ENCODE measurements at regions of chr19 and their contacts with region 1.

Region 1: DNA sequence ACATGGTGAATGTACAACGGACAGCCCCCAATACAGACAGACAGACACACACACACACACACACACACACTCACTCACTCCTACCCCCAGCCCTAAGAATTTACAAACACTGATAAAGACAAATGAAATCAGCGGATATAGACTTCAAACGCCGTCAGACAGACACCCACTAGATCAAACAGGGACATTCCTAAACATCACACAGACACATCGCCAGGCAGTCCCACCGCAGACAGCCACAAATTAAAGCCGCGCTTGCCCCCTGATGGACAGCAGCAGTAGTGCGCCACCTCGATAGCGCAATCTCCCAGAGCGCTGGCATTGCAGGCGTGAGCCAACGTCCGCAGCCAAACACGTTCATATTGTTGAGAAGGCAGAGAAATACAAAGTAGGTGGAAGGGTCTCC is 24.7 kb upstream of the ADGRE1 start:
- DNase-seq: peak; percentile 96
- H3K4me3 ChIP-seq: peak overlapping the region; percentile 62
- H3K27ac ChIP-seq: peak overlapping the region; percentile 56
- H3K4me1 ChIP-seq: peaks cover 18% of the 10 kb centered on the region
- CTCF ChIP-seq: peak; percentile 100

Region 2: GRCh38 chr19:6516659-6517291 is 345.9 kb before region 1 on chr19:
- CTCF ChIA-PET with region 1: no interaction called
- POLR2A ChIA-PET with region 1: no interaction called
- intact Hi-C with region 1: loop called (anchors 1 kb)
- DNase-seq: peak; percentile 98
- H3K4me3 ChIP-seq: peak overlapping the region; percentile 70
- H3K27ac ChIP-seq: peak overlapping the region; percentile 90
- H3K4me1 ChIP-seq: peaks cover 53% of the 10 kb centered on the region
- CTCF ChIP-seq: peak; percentile 100

Region 3: DNA sequence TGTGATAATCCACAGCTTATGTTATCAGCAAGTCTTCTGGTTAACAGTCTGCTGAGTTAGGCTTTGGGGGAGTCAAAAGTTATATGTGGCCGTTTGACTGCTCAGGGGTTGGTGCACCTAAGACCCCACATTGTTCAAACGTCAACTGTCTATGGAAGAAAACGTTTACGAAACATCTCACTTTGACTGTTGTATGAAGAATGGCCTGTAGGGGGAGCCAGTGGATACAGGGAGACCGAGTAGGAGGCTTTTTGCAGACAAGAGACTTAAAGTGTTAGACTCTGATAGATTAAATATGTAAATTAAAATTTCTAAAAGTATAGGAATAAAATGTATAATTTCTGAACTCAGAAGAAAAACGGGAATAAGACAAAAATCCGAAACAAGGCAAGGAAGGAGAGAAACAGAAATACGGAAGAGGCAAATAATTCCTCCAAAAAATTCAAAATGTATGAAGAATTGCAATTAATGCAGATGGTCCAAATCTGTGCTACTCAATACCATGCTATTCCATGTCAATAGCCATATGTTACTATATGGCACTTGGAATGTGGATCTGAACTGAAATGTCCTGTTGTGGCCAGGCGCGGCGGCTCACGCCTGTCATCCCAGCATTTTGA is 230.6 kb before region 1 on chr19:
- CTCF ChIA-PET with region 1: no interaction called
- POLR2A ChIA-PET with region 1: interaction called, 3 read pairs
- intact Hi-C with region 1: loop called (anchors 1 kb)
- DNase-seq: peak; percentile 92
- H3K4me3 ChIP-seq: no peak overlapping the region
- H3K27ac ChIP-seq: peak overlapping the region; percentile 7
- H3K4me1 ChIP-seq: peaks cover 33% of the 10 kb centered on the region
- CTCF ChIP-seq: peak; percentile 99

Region 4: GRCh38 chr19:6753178-6754031 is 109.3 kb before region 1 on chr19:
- CTCF ChIA-PET with region 1: no interaction called
- POLR2A ChIA-PET with region 1: interaction called, 3 read pairs
- intact Hi-C with region 1: loop called (anchors 1 kb)
- DNase-seq: peak; percentile 99
- H3K4me3 ChIP-seq: peak overlapping the region; percentile 63
- H3K27ac ChIP-seq: peak overlapping the region; percentile 50
- H3K4me1 ChIP-seq: peaks cover 12% of the 10 kb centered on the region
- CTCF ChIP-seq: peak; percentile 84

Region 5: DNA sequence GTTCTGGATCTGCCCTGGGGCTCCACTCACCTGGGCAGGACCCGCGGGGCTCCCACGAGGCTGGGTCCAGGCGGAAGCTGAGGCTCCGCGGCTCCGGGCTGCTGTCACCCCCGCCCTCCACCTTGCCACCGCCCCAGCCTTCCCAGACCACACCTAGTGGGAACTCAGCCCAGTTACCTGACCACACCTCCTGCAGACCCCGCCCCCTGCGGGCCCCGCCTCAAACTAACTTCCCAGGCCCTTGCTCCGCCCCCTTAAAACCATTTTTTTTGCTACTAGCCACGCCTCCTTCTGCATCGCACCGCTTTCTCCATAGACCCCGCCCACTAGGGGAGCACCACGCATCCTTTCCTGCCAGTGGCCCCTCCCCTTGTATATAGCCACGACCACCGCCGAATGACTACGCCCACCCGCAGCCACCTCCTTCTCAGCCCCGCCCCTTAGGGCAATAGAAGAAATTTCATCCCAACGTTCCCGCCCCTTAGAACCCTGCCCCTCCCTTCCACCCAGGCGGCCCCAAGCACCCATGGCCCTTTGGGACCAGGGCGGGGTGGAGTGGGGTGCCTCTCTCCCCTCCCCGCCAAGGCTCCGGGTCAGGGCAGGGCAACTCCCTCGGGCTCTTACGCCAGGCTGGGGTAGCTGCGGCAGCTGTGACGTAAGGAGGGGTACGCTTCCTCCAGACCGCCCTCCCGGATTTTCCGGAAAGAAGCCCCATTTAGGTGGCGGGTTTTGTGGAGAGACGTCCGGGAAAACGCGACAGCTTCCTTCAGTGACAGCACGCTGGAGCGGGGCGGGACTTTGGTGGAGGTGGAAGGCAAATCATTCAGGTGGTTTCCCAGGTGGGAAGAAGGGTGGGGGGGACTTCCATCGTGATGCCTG is 95.1 kb before region 1 on chr19 and contains the start of gene SH2D3A:
- CTCF ChIA-PET with region 1: interaction called, 19 read pairs
- POLR2A ChIA-PET with region 1: no interaction called
- intact Hi-C with region 1: loop called (anchors 1 kb)
- DNase-seq: peak; percentile 99
- H3K4me3 ChIP-seq: peak within 1 kb of the TSS; percentile 75
- H3K27ac ChIP-seq: peak within 1 kb of the TSS; percentile 47
- H3K4me1 ChIP-seq: peaks cover 32% of the 10 kb centered on the region
- CTCF ChIP-seq: no peak
- total RNA-seq, gene SH2D3A: 7.8 and 8.5 TPM in 2 replicates

Region 6: DNA sequence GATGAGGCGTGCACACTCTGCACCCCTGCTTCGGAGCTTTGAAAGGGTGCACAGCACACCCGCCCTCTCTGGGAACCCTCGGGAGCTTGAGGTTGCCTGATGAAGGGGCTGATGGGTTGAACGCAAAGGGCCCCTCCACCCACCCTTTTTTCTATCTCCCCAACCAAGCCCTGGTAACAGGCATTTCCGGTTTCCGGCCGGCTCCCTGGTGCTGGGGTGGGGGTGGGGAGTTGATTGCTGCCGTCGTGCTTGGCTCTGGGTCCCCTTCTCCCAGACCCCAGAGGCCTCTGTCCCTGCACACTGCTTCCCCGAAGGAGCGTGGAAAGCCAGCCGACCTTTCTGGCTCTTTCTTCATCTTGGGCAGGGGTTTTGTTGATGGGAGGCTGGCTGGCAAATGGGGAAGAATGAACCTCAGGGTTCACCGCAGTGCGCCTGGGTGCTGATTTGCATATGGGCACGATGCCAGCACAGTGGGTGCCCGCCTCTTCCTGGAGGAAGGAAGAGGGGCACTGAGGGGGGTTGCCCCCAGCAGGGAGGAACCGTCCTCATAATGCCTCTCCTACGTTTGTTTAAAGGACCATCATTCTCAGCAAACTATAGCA is 61.1 kb before region 1 on chr19:
- CTCF ChIA-PET with region 1: no interaction called
- POLR2A ChIA-PET with region 1: no interaction called
- intact Hi-C with region 1: loop called (anchors 2 kb)
- DNase-seq: peak; percentile 97
- H3K4me3 ChIP-seq: peak overlapping the region; percentile 66
- H3K27ac ChIP-seq: peak overlapping the region; percentile 94
- H3K4me1 ChIP-seq: peaks cover 75% of the 10 kb centered on the region
- CTCF ChIP-seq: no peak

Region 7: GRCh38 chr19:6987850-6988249 is 125.2 kb after region 1 on chr19:
- CTCF ChIA-PET with region 1: no interaction called
- POLR2A ChIA-PET with region 1: no interaction called
- intact Hi-C with region 1: no loop called
- DNase-seq: no peak
- H3K4me3 ChIP-seq: no peak overlapping the region
- H3K27ac ChIP-seq: no peak overlapping the region
- H3K4me1 ChIP-seq: no peaks in the 10 kb centered on the region
- CTCF ChIP-seq: no peak

Measured in OCI-LY7 (cell line).